ENCODE measurements at regions of chr1 and their contacts with region 1.

Region 1: DNA sequence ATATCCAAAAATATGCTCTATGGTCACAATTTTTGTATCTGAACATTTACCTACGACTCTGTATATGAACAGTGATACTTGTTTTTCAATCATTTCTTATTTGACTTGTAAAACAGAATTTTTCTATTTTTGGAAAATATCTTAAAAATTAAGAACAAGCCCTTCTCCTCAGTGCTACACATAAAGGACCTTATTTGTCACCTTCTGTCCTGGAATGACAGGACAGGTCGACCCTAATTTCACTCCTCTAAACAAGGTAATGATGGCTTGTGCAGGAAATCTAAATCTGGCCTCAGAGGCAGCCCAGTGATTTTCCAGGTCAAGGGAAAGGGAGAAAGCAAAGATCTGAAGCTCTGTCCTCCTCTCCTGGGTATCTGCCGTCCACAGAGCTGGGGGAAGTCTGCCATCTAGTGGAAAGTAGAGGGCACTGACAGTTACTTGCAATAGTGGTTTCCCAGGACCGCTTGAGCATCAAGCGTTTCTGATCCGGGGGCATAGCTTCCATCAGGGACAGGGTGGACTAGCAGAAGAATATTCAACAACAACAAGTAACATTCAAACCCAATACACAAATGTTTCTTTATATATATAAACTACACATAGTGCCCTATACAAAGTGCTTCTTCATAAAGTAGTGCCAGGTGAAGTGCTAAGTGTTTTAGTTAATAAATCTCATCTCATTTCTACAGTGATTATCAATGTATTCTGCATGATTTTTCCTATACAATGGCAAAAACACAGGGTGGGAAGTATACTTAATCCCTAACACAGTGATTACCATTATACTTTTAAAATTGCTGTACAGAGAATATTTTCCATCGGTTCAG is 74.6 kb downstream of the SLC25A24 start:
- DNase-seq: peak; percentile 71
- H3K4me3 Mint-ChIP-seq: no peak overlapping the region
- H3K27ac Mint-ChIP-seq: no peak overlapping the region
- H3K4me1 Mint-ChIP-seq: peaks cover 4% of the 10 kb centered on the region
- H3K27me3 Mint-ChIP-seq: no peaks in the 10 kb centered on the region

Region 2: DNA sequence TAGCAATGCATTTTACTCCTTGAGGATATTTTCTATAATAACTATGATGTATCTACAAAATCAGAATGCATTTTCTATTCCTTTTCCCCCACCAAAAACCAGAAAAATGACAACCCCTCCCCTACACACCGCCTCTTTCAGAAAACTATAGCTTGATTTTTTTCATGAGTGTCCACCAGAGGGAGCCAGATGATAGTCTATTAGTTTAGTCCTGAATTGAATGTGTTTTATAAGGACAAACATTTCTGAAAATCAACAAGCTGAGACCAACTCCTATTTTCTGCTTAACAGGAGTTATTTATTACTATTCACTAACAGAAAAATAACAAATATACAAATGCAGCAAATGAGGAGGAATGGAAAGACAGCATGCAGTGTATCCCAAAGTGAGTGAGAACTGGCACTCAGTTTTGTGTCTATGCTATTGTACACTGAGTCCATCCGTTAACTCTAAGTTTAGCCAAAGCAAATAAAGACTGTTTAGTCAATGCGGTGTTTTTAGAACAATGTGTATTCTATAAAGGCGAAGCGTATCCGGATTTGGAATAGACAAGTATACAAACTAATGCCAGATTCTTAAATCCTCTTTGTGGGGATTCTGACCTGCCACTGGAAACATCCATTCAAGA is 343.2 kb before region 1 on chr1:
- CTCF ChIA-PET with region 1: interaction called, 423 read pairs
- POLR2A ChIA-PET with region 1: interaction called, 6 read pairs
- intact Hi-C with region 1: loop called (anchors 1 kb)
- DNase-seq: no peak
- H3K4me3 Mint-ChIP-seq: no peak overlapping the region
- H3K27ac Mint-ChIP-seq: no peak overlapping the region
- H3K4me1 Mint-ChIP-seq: peaks cover 24% of the 10 kb centered on the region
- H3K27me3 Mint-ChIP-seq: no peaks in the 10 kb centered on the region

Region 3: GRCh38 chr1:107897438-107898345 is 227.8 kb before region 1 on chr1:
- CTCF ChIA-PET with region 1: interaction called, 4 read pairs
- POLR2A ChIA-PET with region 1: no interaction called
- intact Hi-C with region 1: loop called (anchors 1 kb)
- DNase-seq: no peak
- H3K4me3 Mint-ChIP-seq: no peak overlapping the region
- H3K27ac Mint-ChIP-seq: no peak overlapping the region
- H3K4me1 Mint-ChIP-seq: peaks cover 19% of the 10 kb centered on the region
- H3K27me3 Mint-ChIP-seq: no peaks in the 10 kb centered on the region

Region 4: DNA sequence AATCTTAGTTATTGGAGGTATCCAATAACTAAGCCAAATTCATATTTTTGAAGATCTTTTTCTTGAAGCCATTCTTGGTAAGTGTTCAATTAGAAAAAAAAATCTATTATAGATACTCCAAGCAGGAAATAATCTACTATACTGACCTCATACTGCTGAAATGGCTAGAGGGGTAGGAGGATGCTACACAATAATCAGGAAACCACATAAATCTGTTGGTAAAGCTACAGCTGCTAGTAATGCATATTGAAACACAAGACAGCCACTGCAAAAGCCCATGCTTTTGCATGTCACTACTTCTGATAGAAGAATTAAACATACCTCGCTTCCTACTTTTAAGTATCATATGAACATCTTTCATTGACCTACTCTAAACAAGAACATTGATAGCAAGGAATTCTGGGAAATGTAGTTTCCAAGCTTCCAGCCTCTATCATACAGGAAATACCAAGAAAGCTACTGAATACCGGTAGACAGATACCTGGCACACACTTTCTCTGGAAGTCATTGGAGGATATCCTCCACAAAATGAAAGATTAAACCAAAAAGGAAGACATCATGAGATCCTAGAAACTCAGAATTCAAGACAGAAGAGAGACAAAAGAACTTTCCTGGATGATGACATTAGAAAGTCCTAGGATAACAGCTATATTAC is 57.5 kb before region 1 on chr1:
- CTCF ChIA-PET with region 1: no interaction called
- POLR2A ChIA-PET with region 1: no interaction called
- intact Hi-C with region 1: no loop called
- DNase-seq: no peak
- H3K4me3 Mint-ChIP-seq: no peak overlapping the region
- H3K27ac Mint-ChIP-seq: no peak overlapping the region
- H3K4me1 Mint-ChIP-seq: peaks cover 9% of the 10 kb centered on the region
- H3K27me3 Mint-ChIP-seq: no peaks in the 10 kb centered on the region

Region 5: GRCh38 chr1:108079440-108080025 is 46.0 kb before region 1 on chr1:
- CTCF ChIA-PET with region 1: no interaction called
- POLR2A ChIA-PET with region 1: no interaction called
- intact Hi-C with region 1: loop called (anchors 5 kb)
- DNase-seq: peak; percentile 70
- H3K4me3 Mint-ChIP-seq: no peak overlapping the region
- H3K27ac Mint-ChIP-seq: peak overlapping the region; percentile 64
- H3K4me1 Mint-ChIP-seq: peaks cover 61% of the 10 kb centered on the region
- H3K27me3 Mint-ChIP-seq: no peaks in the 10 kb centered on the region